Endothelial cell of umbilical vein (primary cell): ENCODE measurements at regions of chr18 and their contacts with region 1.

Region 1: GRCh38 chr18:56748698-56749268 is 97.6 kb downstream of the WDR7 start:
- DNase-seq: peak; percentile 60
- H3K4me3 ChIP-seq: no peak overlapping the region
- H3K27ac ChIP-seq: no peak overlapping the region
- H3K4me1 ChIP-seq: peaks cover 4% of the 10 kb centered on the region
- H3K27me3 ChIP-seq: no peaks in the 10 kb centered on the region
- CTCF ChIP-seq: peak; percentile 24 to 40
- POLR2A ChIP-seq: no peak

Region 2: DNA sequence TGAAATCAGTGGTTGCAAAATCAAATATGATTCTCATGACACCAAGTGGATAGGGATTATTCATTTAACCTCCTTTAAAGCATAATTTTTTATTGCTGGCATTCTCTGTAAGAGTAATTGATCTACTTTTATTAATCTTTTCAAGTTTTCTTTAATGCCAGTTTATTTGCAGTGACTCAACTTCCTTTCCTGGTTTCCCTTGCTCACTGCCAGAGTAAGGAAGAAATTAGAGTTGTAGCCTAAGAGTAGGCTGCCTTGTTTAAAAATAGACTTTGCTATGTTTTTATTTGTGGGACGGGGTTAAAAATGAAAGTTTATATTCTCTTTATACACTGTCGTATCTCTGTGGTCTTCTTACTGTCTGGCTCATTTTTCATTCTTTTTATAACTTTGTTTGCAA is 51.0 kb after region 1 on chr18:
- CTCF ChIA-PET with region 1: no interaction called
- POLR2A ChIA-PET with region 1: no interaction called
- dilution Hi-C with region 1: no loop called
- intact Hi-C with region 1: loop called (anchors 2 kb)
- DNase-seq: peak; percentile 70
- H3K4me3 ChIP-seq: no peak overlapping the region
- H3K27ac ChIP-seq: peak overlapping the region; percentile 13
- H3K4me1 ChIP-seq: peaks cover 13% of the 10 kb centered on the region
- H3K27me3 ChIP-seq: no peaks in the 10 kb centered on the region
- CTCF ChIP-seq: no peak
- POLR2A ChIP-seq: no peak

Region 3: GRCh38 chr18:57446322-57446721 is 697.5 kb after region 1 on chr18:
- CTCF ChIA-PET with region 1: interaction called, 13 read pairs
- POLR2A ChIA-PET with region 1: no interaction called
- dilution Hi-C with region 1: no loop called
- intact Hi-C with region 1: loop called (anchors 1 kb)
- DNase-seq: no peak
- H3K4me3 ChIP-seq: no peak overlapping the region
- H3K27ac ChIP-seq: no peak overlapping the region
- H3K4me1 ChIP-seq: no peaks in the 10 kb centered on the region
- H3K27me3 ChIP-seq: peaks cover 30 to 39% of the 10 kb centered on the region in 2 experiments
- CTCF ChIP-seq: peak; percentile 48 to 76
- POLR2A ChIP-seq: no peak